ENCODE measurements at regions of chr19 and their contacts with region 1.

Region 1: DNA sequence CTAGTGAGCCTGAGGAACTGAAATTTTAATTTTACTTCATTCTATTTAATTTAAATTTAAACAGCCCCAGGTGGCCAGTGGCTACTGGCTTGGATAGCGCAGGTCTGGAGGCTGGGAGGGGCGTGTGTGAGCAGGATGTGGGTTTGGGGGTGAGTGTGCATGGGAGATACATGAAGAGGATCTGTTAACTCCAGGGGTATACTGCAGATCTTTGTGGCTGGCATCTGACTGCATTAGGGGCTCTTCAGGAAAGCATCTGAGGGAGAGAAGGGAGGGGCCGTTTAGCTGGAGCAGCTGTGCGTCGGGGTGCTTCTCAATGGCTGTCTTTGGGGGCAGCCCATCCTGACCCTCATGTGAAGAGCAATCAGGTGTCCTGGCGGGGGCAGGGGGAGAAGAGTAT is 6.8 kb downstream of the SHANK1 start:
- DNase-seq: peak; percentile 45
- ATAC-seq: peak; percentile 40
- H3K4me3 Mint-ChIP-seq: no peak overlapping the region
- H3K27ac Mint-ChIP-seq: no peak overlapping the region
- H3K4me1 Mint-ChIP-seq: peaks cover 14% of the 10 kb centered on the region
- H3K27me3 Mint-ChIP-seq: peaks cover 15% of the 10 kb centered on the region
- CTCF ChIP-seq: no peak

Region 2: GRCh38 chr19:50693064-50693975 is 19.5 kb before region 1 on chr19:
- CTCF ChIA-PET with region 1: no interaction called
- POLR2A ChIA-PET with region 1: no interaction called
- intact Hi-C with region 1: no loop called
- DNase-seq: no peak
- ATAC-seq: no peak
- H3K4me3 Mint-ChIP-seq: no peak overlapping the region
- H3K27ac Mint-ChIP-seq: no peak overlapping the region
- H3K4me1 Mint-ChIP-seq: peaks cover 2% of the 10 kb centered on the region
- H3K27me3 Mint-ChIP-seq: peaks cover 46% of the 10 kb centered on the region
- CTCF ChIP-seq: no peak

Region 3: DNA sequence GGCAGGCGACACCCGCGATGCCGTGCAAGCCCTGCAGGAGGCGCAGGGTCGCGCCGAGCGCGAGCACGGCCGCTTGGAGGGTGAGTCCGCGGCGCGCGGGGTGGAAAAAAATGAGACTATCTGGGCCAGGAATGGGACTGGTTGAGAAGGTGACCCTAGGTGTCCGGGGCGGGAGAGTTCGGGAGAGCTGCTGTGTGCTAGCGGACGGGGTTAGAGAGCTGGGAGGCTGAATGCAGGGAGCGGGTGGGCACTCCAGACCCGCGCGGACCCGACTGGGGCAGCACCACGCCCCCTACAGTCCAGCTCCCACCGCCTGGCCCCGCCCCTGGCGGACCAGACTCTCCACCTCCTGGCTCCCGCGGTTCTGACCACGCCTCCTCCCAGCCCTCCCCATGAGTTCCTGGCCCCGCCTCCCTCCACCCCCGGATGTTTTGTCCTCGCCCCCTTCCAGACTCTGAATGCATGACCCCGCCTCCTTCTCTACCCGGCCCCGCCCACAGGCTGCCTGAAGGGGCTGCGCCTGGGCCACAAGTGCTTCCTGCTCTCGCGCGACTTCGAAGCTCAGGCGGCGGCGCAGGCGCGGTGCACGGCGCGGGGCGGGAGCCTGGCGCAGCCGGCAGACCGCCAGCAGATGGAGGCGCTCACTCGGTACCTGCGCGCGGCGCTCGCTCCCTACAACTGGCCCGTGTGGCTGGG is 11.8 kb after region 1 on chr19:
- CTCF ChIA-PET with region 1: interaction called, 15 read pairs
- POLR2A ChIA-PET with region 1: interaction called, 6 read pairs
- intact Hi-C with region 1: no loop called
- DNase-seq: peak; percentile 99
- ATAC-seq: peak; percentile 86
- H3K4me3 Mint-ChIP-seq: peak overlapping the region; percentile 83
- H3K27ac Mint-ChIP-seq: peak overlapping the region; percentile 84
- H3K4me1 Mint-ChIP-seq: peaks cover 25% of the 10 kb centered on the region
- H3K27me3 Mint-ChIP-seq: peaks cover 42% of the 10 kb centered on the region
- CTCF ChIP-seq: peak; percentile 85

Measured in activated CD8-positive, alpha-beta T cell treated with anti-CD3 and anti-CD28 coated beads for 36 hours (primary cell).